ENCODE measurements at regions of chr6 and their contacts with region 1.

Region 1: DNA sequence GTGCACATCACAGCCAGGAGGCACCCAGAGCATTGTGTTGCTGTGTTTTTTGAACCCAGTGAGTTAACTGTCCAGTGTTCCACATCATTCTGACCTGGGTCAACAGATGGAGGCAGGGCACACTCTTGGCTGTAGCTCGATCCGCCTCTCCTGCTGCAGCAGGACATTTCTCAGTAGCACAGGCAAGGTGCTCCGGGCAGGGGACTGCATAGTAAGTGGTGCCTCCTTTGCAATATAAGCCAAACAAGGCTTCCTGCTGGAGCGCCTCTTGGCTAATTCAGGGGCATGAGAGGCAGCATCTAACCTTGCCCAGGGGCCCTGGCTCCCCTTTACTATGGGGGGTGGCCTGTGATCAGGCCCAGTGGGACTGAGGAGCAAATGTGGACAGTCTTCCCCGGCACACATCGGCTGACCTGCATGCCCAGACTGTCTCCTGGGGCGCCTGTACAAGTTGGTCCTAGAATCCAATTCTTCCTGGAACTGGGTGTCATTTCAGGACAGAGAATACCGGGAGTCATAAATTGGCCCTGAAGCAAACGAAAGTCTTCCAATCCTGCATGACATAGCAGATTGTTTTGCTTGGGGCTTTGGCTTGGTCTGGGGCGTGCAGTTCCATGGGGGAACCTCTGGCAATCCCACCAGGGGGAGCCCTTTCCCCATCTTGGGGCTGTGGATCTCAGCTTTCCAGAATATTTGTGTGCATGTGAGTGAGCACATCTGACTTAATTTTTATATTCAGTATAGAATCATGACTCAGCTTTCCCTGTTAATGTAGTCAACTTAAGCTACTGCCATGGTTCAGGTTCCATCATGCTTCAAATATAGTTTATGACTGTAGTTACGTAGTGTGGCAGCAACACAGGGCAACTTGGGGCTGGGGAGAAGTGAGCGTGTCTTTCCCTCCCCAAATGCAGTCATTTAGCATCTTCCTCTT is 56.0 kb upstream of the DDR1 start:
- DNase-seq: peak; percentile 94
- H3K4me3 ChIP-seq: no peak overlapping the region
- H3K27ac ChIP-seq: peak overlapping the region; percentile 59
- H3K4me1 ChIP-seq: peaks cover 11% of the 10 kb centered on the region
- H3K27me3 ChIP-seq: no peaks in the 10 kb centered on the region
- CTCF ChIP-seq: peak; percentile 93

Region 2: GRCh38 chr6:30877419-30878371 is 49.4 kb after region 1 on chr6:
- intact Hi-C with region 1: loop called (anchors 2 kb)
- DNase-seq: peak; percentile 94
- H3K4me3 ChIP-seq: peak overlapping the region; percentile 10
- H3K27ac ChIP-seq: peak overlapping the region; percentile 71
- H3K4me1 ChIP-seq: peaks cover 7% of the 10 kb centered on the region
- H3K27me3 ChIP-seq: no peaks in the 10 kb centered on the region
- CTCF ChIP-seq: peak; percentile 73

Region 3: GRCh38 chr6:31087494-31088089 is 259.3 kb after region 1 on chr6:
- intact Hi-C with region 1: loop called (anchors 5 kb)
- DNase-seq: peak; percentile 94
- H3K4me3 ChIP-seq: no peak overlapping the region
- H3K27ac ChIP-seq: no peak overlapping the region
- H3K4me1 ChIP-seq: no peaks in the 10 kb centered on the region
- H3K27me3 ChIP-seq: no peaks in the 10 kb centered on the region
- CTCF ChIP-seq: peak; percentile 65

Measured in colonic mucosa (tissue), 4 donors.